ENCODE measurements at regions of chr1 and their contacts with region 1.

Region 1: DNA sequence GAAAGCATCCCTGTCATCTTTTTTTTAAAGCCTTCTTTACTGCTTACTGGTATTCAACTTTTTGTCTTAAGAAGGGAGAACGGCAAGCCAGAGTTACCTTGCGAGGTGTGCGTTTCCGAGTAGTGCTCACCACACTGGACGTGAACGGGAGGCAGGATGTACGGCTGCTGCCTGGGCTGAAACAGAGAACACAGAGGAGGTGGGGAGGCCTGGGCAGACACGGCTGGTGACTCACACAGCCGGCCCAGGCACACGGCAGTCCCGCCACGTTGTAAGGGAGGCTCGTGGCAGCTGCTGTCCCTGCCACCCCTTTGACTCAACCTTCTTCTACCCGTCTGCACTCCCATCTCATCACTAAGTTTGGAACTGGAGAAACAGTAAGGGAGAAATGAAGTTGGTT is 105.8 kb downstream of the SMYD2 start:
- DNase-seq: no peak
- ATAC-seq: no peak; the same call in 1 of the 2 replicates
- H3K4me3 Mint-ChIP-seq: no peak overlapping the region
- H3K27ac Mint-ChIP-seq: peak overlapping the region; percentile 92
- H3K4me1 Mint-ChIP-seq: peaks cover 19% of the 10 kb centered on the region
- H3K27me3 Mint-ChIP-seq: no peaks in the 10 kb centered on the region
- CTCF ChIP-seq: no peak

Region 2: DNA sequence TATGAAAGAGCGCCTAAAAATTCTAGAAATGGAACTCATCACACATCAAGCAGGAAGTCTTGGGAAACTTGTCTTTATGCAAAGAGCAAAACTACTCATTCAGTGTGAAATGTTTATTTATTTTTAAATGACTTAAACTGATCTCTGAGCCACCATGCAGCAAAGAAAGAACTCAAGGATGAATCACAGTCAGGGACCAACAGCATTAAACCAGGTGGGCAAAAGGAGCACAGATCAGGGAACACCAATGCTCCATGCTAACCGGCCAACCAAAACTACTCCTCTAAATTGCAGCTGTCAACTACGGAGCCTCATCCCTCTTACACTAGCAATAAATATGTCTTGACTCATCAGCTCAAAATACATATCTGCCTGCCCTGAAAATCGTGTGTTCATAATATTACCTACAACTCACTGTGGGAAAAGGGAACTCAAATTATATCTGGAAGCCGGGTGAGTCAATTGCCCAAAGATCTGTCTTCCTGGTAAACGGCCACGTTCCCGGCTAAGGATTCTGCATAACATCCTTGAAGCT is 35.5 kb after region 1 on chr1:
- CTCF ChIA-PET with region 1: no interaction called
- POLR2A ChIA-PET with region 1: no interaction called
- DNase-seq: no peak
- ATAC-seq: no peak
- H3K4me3 Mint-ChIP-seq: no peak overlapping the region
- H3K27ac Mint-ChIP-seq: peak overlapping the region; percentile 42; the same call in 1 of the 2 replicates
- H3K4me1 Mint-ChIP-seq: peaks cover 65% of the 10 kb centered on the region
- H3K27me3 Mint-ChIP-seq: no peaks in the 10 kb centered on the region
- CTCF ChIP-seq: no peak

Region 3: GRCh38 chr1:214452152-214452784 is 65.5 kb after region 1 on chr1:
- CTCF ChIA-PET with region 1: interaction called, 12 read pairs
- POLR2A ChIA-PET with region 1: no interaction called
- DNase-seq: no peak
- ATAC-seq: peak; percentile 19; the same call in 1 of the 2 replicates
- H3K4me3 Mint-ChIP-seq: peak overlapping the region; percentile 31
- H3K27ac Mint-ChIP-seq: peak overlapping the region; percentile 75
- H3K4me1 Mint-ChIP-seq: peaks cover 65% of the 10 kb centered on the region
- H3K27me3 Mint-ChIP-seq: no peaks in the 10 kb centered on the region
- CTCF ChIP-seq: no peak

Region 4: DNA sequence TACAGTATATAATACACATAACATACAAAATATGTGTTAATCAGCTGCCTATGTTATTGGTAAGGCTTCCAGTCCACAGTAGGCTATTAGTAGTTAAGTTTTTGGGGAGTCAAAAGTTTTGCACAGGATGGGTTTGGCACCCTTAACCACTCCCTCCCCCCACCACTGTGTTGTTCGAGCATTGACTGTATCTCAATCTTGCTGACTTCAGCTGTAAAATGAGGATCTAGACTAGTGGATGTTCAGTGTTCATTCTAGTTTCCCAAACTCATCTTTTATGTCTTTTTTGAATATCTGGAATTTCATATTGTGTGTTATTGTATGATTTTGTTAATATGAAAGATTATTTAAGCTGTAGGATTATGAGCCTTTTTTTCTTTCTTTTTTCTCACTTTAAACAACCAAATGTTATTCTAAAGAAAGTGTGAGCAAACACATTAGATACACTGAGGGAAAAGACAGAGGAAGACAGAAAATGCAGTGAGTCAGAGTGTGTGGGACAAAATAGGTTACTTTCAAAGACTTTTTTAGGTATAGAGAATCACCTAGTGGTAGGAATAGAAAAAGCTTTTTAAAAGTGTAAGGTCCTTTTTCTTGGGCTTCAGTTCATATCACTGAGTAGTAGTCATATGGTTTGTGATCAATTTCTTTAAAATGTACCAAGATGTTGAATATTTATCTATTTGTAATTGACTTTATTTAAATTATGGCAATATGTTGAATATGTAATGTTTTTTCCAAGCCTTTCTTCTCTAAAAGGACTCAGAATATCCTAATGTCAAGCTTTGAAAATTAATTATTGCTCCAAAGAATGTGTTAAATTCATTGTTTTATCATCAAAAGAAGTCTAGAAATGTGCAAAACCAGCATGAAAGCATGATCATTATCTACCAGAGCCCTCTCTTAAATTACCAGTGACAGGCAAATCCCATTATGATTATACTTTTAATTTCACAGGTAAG is 198.3 kb after region 1 on chr1:
- CTCF ChIA-PET with region 1: interaction called, 23 read pairs
- POLR2A ChIA-PET with region 1: no interaction called
- DNase-seq: no peak
- ATAC-seq: peak; percentile 62
- H3K4me3 Mint-ChIP-seq: no peak overlapping the region
- H3K27ac Mint-ChIP-seq: no peak overlapping the region
- H3K4me1 Mint-ChIP-seq: peaks cover 18% of the 10 kb centered on the region
- H3K27me3 Mint-ChIP-seq: no peaks in the 10 kb centered on the region
- CTCF ChIP-seq: peak; percentile 43